ENCODE measurements at regions of chr11 and their contacts with region 1.

Region 1: DNA sequence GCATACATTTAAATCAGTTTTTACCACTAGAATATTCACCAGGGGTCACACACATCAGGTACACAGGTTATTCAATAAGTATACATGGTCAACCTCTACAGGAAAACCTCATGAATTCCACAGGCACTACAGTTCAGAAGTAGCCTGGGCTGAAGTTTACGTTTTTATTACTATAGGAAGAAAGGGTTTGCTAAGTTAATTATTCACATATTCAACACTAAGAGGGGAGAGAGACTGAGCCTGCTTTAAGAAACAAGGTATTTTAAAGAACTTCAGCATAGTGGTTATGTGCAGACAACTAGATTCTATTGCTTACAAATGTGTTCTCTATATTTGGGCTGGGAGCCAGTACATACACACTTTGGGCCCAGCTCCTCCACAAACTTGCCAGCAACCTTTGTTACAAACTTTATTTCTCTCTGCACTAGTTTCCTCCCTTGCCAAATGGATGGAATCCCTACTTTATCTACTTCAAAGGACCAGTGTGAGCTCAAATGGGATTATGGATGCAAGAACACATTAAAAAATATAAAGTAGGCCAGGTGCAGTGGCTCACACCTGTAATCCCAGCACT is 31.9 kb downstream of the IL18BP start:
- DNase-seq: no peak
- ATAC-seq: no peak
- H3K4me3 Mint-ChIP-seq: no peak overlapping the region
- H3K27ac Mint-ChIP-seq: peak overlapping the region; percentile 43
- H3K4me1 Mint-ChIP-seq: peaks cover 50% of the 10 kb centered on the region
- H3K27me3 Mint-ChIP-seq: no peaks in the 10 kb centered on the region

Region 2: GRCh38 chr11:71946144-71946571 is 84.4 kb before region 1 on chr11:
- CTCF ChIA-PET with region 1: no interaction called
- POLR2A ChIA-PET with region 1: no interaction called
- intact Hi-C with region 1: no loop called
- DNase-seq: peak; percentile 20
- ATAC-seq: peak; percentile 68
- H3K4me3 Mint-ChIP-seq: no peak overlapping the region
- H3K27ac Mint-ChIP-seq: peak overlapping the region; percentile 40
- H3K4me1 Mint-ChIP-seq: peaks cover 28% of the 10 kb centered on the region
- H3K27me3 Mint-ChIP-seq: no peaks in the 10 kb centered on the region

Region 3: DNA sequence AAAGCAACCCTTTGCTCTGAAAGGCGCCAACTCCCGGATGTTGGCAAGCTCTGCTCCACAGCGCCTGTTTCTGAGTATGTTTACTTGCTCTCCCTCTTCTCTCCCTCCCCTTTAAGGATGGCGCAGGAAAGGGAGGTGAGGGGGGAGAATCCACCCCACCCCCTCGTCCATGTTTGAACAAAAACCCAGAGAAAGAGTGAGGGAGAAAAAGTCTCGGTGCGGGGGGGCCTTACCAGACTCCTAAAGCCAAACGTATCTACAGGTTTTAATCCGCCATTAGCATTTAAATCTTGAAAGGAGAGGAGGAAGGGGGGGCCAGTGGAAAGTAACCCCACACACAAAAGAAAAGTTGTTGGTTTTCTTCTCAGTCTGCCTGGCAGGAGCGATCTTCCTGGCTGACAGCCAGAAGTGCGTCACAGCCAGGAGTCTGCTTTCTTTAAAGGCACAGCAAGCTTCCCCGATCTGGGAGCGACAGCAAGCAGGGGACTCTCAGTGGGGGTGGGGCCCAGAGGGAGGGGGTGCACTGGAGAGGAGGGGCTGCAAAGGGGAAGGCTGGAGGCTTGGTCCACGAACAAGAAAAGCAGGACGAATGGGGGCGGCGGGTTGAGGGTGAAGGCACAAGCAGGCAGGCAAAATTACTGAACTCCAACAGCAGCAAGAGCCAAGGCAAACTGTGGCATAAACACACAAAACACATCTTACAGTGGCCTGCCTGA is 10.3 kb after region 1 on chr11:
- CTCF ChIA-PET with region 1: interaction called, 58 read pairs
- POLR2A ChIA-PET with region 1: interaction called, 3 read pairs
- intact Hi-C with region 1: no loop called
- DNase-seq: peak; percentile 86
- ATAC-seq: peak; percentile 76
- H3K4me3 Mint-ChIP-seq: no peak overlapping the region
- H3K27ac Mint-ChIP-seq: no peak overlapping the region
- H3K4me1 Mint-ChIP-seq: peaks cover 35% of the 10 kb centered on the region
- H3K27me3 Mint-ChIP-seq: no peaks in the 10 kb centered on the region

Region 4: DNA sequence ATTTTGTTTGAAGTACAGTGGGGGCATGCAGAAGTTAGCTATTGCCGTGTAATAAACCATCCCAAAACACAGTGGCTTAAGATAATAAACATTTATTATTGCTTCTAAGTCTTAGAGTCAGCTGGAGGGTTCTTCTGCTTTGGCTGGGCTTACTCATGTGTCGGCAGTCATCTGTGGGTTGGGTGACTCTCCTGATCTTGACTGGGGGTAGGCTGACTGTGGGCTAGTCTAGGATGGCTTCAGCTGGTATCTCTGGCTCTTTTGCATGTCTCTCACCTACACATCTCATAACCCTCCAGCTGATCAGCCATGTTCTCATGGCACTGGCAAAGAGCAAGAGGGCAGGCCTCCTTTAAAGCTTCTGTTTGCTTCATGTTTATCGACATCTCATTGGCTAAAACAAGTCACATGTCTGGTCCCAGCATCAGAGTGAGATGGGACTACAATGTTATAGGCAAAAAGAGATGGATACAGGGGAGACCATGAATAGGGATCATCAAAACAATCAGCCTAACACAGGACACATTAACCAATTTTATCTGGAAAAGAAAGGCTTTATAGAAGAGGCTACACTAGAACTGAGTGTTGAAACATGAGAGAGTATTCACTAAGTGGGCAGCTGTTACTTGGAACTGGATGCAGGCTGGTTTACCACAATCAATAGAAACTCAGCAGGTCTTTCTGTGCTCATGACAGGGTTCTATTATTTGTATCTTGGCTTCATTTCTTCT is 55.2 kb after region 1 on chr11:
- CTCF ChIA-PET with region 1: interaction called, 89 read pairs
- POLR2A ChIA-PET with region 1: interaction called, 4 read pairs
- intact Hi-C with region 1: no loop called
- DNase-seq: no peak
- ATAC-seq: no peak
- H3K4me3 Mint-ChIP-seq: no peak overlapping the region
- H3K27ac Mint-ChIP-seq: no peak overlapping the region
- H3K4me1 Mint-ChIP-seq: peaks cover 23% of the 10 kb centered on the region
- H3K27me3 Mint-ChIP-seq: no peaks in the 10 kb centered on the region

Region 5: GRCh38 chr11:72102946-72103753 is 72.6 kb after region 1 on chr11 and contains the start of gene LAMTOR1:
- CTCF ChIA-PET with region 1: interaction called, 10 read pairs
- POLR2A ChIA-PET with region 1: no interaction called
- intact Hi-C with region 1: no loop called
- DNase-seq: peak; percentile 99
- ATAC-seq: peak; percentile 98
- H3K4me3 Mint-ChIP-seq: peak within 1 kb of the TSS; percentile 97
- H3K27ac Mint-ChIP-seq: peak within 1 kb of the TSS; percentile 95
- H3K4me1 Mint-ChIP-seq: peaks cover 38% of the 10 kb centered on the region
- H3K27me3 Mint-ChIP-seq: no peaks in the 10 kb centered on the region
- total RNA-seq, gene LAMTOR1: 50.7 to 52.2 TPM

Region 6: GRCh38 chr11:72123117-72123653 is 92.6 kb after region 1 on chr11:
- CTCF ChIA-PET with region 1: no interaction called
- POLR2A ChIA-PET with region 1: no interaction called
- intact Hi-C with region 1: no loop called
- DNase-seq: no peak
- ATAC-seq: no peak
- H3K4me3 Mint-ChIP-seq: no peak overlapping the region
- H3K27ac Mint-ChIP-seq: no peak overlapping the region
- H3K4me1 Mint-ChIP-seq: no peaks in the 10 kb centered on the region
- H3K27me3 Mint-ChIP-seq: peaks cover 3% of the 10 kb centered on the region

Region 7: DNA sequence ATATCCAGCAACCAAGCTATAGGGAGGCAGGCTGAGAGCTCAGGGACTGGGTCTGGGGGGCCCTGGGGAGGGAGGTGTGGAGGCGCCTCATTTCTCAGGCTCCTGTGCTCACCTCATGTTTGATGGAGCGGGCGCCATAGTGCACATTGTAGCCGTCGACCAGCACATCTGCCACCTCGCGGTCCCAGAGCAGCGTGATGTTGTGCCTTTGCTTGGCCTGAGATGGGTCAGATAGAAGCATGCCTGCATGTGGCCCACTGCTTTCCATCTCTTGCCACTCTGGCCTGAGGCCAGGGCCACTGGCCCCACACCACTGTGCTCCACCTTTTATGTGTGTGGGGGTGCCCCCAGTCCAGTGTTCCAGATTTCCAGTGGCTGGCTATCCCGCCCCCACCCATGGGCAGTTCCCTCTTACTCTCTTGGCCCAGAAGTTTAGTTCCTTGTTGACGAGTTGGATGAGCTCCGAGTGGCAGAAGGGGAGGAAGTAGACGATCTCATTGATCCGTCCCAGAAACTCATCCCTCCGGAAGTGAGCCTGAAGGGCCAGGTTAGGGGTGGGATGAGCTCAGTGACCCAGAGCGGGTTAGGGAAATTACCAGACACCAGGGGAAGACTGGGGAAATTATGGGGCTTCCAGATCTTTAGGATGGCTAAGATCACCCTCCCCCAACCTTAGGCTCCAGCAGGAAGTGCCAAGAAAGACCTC is 263.5 kb after region 1 on chr11:
- CTCF ChIA-PET with region 1: no interaction called
- POLR2A ChIA-PET with region 1: no interaction called
- intact Hi-C with region 1: no loop called
- DNase-seq: no peak
- ATAC-seq: no peak
- H3K4me3 Mint-ChIP-seq: no peak overlapping the region
- H3K27ac Mint-ChIP-seq: no peak overlapping the region
- H3K4me1 Mint-ChIP-seq: no peaks in the 10 kb centered on the region
- H3K27me3 Mint-ChIP-seq: no peaks in the 10 kb centered on the region

Measured in activated CD4-positive, alpha-beta T cell treated with anti-CD3 and anti-CD28 coated beads for 36 hours (primary cell).